CD4-positive, alpha-beta memory T cell (primary cell): ENCODE measurements at regions of chr6 and their contacts with region 1.

Region 1: GRCh38 chr6:25263657-25264056 is 15.5 kb upstream of the CARMIL1 start:
- DNase-seq: no peak
- H3K4me3 ChIP-seq: no peak overlapping the region
- H3K4me3 Mint-ChIP-seq: no peak overlapping the region
- H3K27ac ChIP-seq: no peak overlapping the region
- H3K27ac Mint-ChIP-seq: no peak overlapping the region
- H3K4me1 ChIP-seq: no peaks in the 10 kb centered on the region
- H3K4me1 Mint-ChIP-seq: peaks cover 2 to 4% (median 3%) of the 10 kb centered on the region in 4 donors
- H3K27me3 ChIP-seq: no peaks in the 10 kb centered on the region
- H3K27me3 Mint-ChIP-seq: peaks cover 2 to 9% of the 10 kb centered on the region in 2 donors

Region 2: DNA sequence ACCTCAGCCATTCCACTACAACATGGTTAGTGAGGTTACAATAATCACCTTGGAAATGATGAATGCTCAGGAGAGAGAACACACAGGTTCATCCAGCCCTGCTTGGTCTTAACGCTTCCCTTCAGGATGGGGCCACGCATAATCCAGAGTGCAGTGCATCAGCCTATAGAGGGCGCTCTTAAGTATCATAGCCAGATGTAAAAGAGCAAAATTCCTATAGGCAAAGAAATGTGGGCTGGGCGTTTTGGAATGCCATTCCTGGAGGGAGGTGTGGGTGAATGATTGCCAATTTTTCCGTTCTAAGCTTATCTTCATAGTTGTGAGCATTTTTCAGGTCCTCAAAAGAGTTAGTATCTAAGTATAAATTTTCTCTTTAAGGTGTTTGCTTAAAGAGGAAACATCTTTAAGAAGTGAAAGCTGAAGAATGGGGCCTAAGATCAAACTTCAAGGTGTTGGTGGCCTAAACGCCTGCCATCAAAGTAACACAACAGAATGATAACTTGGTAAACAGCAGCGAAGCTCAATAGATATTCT is 329.7 kb before region 1 on chr6:
- CTCF ChIA-PET with region 1: no interaction called
- POLR2A ChIA-PET with region 1: no interaction called
- intact Hi-C with region 1: no loop called
- DNase-seq: peak; percentile 63 to 74 (median 68)
- H3K4me3 ChIP-seq: peak overlapping the region; percentile 96 to 100
- H3K4me3 Mint-ChIP-seq: peak overlapping the region; percentile 96 to 100 (median 99)
- H3K27ac ChIP-seq: peak overlapping the region; percentile 78
- H3K27ac Mint-ChIP-seq: peak overlapping the region; percentile 87 to 96 (median 94)
- H3K4me1 ChIP-seq: peaks cover 55% of the 10 kb centered on the region
- H3K4me1 Mint-ChIP-seq: peaks cover 39 to 68% (median 51%) of the 10 kb centered on the region in 4 donors
- H3K27me3 ChIP-seq: no peaks in the 10 kb centered on the region
- H3K27me3 Mint-ChIP-seq: no peaks in the 10 kb centered on the region

Region 3: DNA sequence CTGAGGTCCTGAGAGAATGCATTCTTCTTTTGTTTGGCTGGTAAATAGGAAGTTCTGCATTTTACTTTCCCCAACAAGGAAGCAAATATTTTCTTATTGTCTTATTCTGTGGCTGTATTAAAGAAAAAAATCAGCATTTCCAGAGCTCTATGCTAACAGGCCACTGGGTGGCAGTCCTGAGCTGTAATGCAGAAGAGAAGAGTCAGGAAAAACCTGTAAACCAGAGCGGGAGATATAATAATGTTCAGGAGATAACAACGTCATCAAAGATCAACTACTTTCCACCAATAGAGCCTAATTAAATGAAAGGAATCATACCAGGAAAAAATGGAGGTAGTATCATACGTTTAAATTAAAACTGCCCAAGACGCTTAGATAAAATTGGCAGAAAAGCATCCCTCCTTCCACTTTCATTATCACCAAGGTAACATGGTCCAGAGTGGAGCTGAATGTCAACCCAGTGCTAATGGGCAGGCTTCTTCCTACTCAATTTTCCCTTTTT is 40.1 kb before region 1 on chr6:
- CTCF ChIA-PET with region 1: interaction called, 11 read pairs
- POLR2A ChIA-PET with region 1: no interaction called
- intact Hi-C with region 1: no loop called
- DNase-seq: peak; percentile 50 to 56 (median 54)
- H3K4me3 ChIP-seq: no peak overlapping the region
- H3K4me3 Mint-ChIP-seq: peak overlapping the region; percentile 40 to 74 (median 56)
- H3K27ac ChIP-seq: no peak overlapping the region
- H3K27ac Mint-ChIP-seq: peak overlapping the region in 2 of 7 donors; percentile 1 to 4
- H3K4me1 ChIP-seq: peaks cover 5% of the 10 kb centered on the region
- H3K4me1 Mint-ChIP-seq: peaks cover 2 to 9% (median 7%) of the 10 kb centered on the region in 4 donors
- H3K27me3 ChIP-seq: no peaks in the 10 kb centered on the region
- H3K27me3 Mint-ChIP-seq: peaks cover 3 to 6% of the 10 kb centered on the region in 2 donors

Region 4: DNA sequence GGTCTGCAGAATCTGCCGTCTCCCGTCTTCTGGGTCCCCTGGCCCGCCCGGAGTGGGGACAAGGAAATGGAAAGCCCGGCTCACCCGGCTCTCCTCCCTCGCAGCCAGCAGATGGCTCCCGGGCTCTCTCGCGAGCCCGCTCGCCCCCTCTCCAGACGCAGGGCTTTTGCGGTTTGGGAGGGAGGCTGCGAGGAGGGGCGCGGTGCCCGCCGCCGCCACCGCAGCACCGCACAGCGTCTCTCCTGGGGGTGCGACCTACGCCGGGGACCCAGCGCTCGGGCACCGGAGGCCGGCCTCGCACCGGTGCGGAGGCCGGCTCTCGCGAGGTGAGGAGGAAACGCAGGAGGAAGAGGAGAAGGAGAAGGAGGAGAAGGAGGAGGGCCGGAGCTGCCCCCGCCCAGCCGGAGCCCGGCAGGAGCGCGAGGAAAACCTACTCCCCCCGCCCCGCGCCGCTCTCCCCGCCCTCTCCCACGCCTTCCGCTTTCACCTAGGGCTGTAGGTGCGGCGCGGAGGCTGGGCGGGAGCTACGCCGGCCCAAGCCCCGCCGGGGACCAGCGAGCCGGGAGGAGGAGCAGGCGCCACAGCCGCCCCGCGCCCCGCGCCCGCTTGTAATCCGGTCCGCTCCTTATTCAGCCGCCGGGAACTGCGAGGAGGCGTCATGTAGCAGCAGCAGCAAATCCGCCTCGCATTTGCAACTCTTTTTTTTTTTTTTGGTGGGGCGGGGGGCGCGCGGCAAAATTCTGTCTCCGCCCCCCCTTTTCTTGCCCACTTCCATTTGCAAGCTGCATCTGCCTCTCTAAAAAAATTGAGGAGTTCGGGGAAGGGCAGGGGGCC is 15.5 kb after region 1 on chr6 and contains the start of gene CARMIL1:
- CTCF ChIA-PET with region 1: interaction called, 73 read pairs
- POLR2A ChIA-PET with region 1: interaction called, 9 read pairs
- intact Hi-C with region 1: no loop called
- DNase-seq: peak; percentile 57 to 73 (median 63)
- H3K4me3 ChIP-seq: peak within 1 kb of the TSS; percentile 53 to 66
- H3K4me3 Mint-ChIP-seq: peak within 1 kb of the TSS; percentile 82 to 98 (median 93)
- H3K27ac ChIP-seq: peak within 1 kb of the TSS; percentile 42
- H3K27ac Mint-ChIP-seq: peak within 1 kb of the TSS; percentile 81 to 96 (median 90)
- H3K4me1 ChIP-seq: peaks cover 20% of the 10 kb centered on the region
- H3K4me1 Mint-ChIP-seq: peaks cover 21 to 44% (median 28%) of the 10 kb centered on the region in 4 donors
- H3K27me3 ChIP-seq: no peaks in the 10 kb centered on the region
- H3K27me3 Mint-ChIP-seq: peaks cover 0 to 8% of the 10 kb centered on the region in 2 donors
- total RNA-seq, gene CARMIL1: 3.5 TPM

Region 5: GRCh38 chr6:25490018-25490801 is 226.6 kb after region 1 on chr6:
- CTCF ChIA-PET with region 1: interaction called, 202 read pairs
- POLR2A ChIA-PET with region 1: interaction called, 6 read pairs
- intact Hi-C with region 1: loop called (anchors 1 kb)
- DNase-seq: peak; percentile 60 to 68 (median 63)
- H3K4me3 ChIP-seq: no peak overlapping the region
- H3K4me3 Mint-ChIP-seq: no peak overlapping the region
- H3K27ac ChIP-seq: no peak overlapping the region
- H3K27ac Mint-ChIP-seq: peak overlapping the region in 2 of 7 donors; percentile 62 to 79
- H3K4me1 ChIP-seq: no peaks in the 10 kb centered on the region
- H3K4me1 Mint-ChIP-seq: peaks cover 0 to 9% (median 3%) of the 10 kb centered on the region in 4 donors
- H3K27me3 ChIP-seq: no peaks in the 10 kb centered on the region
- H3K27me3 Mint-ChIP-seq: no peaks in the 10 kb centered on the region

Region 6: DNA sequence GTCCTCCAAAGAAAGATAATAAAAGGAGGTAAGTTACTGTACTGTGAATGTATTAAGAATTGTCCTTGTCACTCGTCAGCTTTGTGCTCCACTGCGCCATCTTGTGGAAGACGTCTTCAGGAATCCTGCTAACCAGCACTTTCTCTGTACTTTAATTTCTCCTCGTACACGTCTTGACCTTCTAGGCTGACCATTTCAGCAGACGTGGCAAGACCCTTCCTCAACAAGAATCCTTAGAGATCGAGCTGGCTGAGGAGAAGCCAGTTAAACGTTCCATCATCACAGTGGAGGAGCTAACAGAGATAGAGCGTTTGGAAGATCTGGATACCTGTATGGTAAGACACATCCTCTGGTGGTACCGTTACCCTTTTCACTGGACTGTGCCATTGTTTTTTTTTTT is 292.9 kb after region 1 on chr6:
- CTCF ChIA-PET with region 1: interaction called, 68 read pairs
- POLR2A ChIA-PET with region 1: no interaction called
- intact Hi-C with region 1: loop called (anchors 1 kb)
- DNase-seq: peak; percentile 52 to 61 (median 56)
- H3K4me3 ChIP-seq: no peak overlapping the region
- H3K4me3 Mint-ChIP-seq: no peak overlapping the region
- H3K27ac ChIP-seq: no peak overlapping the region
- H3K27ac Mint-ChIP-seq: no peak overlapping the region
- H3K4me1 ChIP-seq: no peaks in the 10 kb centered on the region
- H3K4me1 Mint-ChIP-seq: peaks cover 0 to 3% (median 3%) of the 10 kb centered on the region in 4 donors
- H3K27me3 ChIP-seq: no peaks in the 10 kb centered on the region
- H3K27me3 Mint-ChIP-seq: no peaks in the 10 kb centered on the region

Region 7: GRCh38 chr6:25889877-25890853 is 626.5 kb after region 1 on chr6:
- CTCF ChIA-PET with region 1: interaction called, 7 read pairs
- POLR2A ChIA-PET with region 1: no interaction called
- intact Hi-C with region 1: loop called (anchors 2 kb)
- DNase-seq: peak in 4 of 5 donors; percentile 34 to 42 (median 40)
- H3K4me3 ChIP-seq: no peak overlapping the region
- H3K4me3 Mint-ChIP-seq: no peak overlapping the region
- H3K27ac ChIP-seq: no peak overlapping the region
- H3K27ac Mint-ChIP-seq: peak overlapping the region in 1 of 7 donors; percentile 43
- H3K4me1 ChIP-seq: no peaks in the 10 kb centered on the region
- H3K4me1 Mint-ChIP-seq: no peaks in the 10 kb centered on the region
- H3K27me3 ChIP-seq: no peaks in the 10 kb centered on the region
- H3K27me3 Mint-ChIP-seq: peaks cover 0 to 2% of the 10 kb centered on the region in 2 donors